H1 (cell line): ENCODE measurements at regions of chr15 and their contacts with region 1.

Region 1: GRCh38 chr15:89673165-89673512 is 6.0 kb downstream of the PLIN1 start:
- DNase-seq: peak in 1 of 2 experiments; percentile 85
- H3K4me3 ChIP-seq: no peak overlapping the region
- H3K27ac ChIP-seq: no peak overlapping the region
- H3K4me1 ChIP-seq: no peaks in the 10 kb centered on the region; a peak in 1 of 7 replicates
- H3K27me3 ChIP-seq: peaks cover 0 to 3% (median 0%) of the 10 kb centered on the region in 4 experiments; a peak in 2 of 7 replicates
- CTCF ChIP-seq: peak; percentile 84 to 94 (median 93)
- EP300 ChIP-seq: no peak
- POLR2A ChIP-seq: no peak
- RAD21 ChIP-seq: peak; percentile 58 to 64

Region 2: GRCh38 chr15:89496155-89497098 is 176.7 kb before region 1 on chr15 and contains the start of gene RHCG:
- CTCF ChIA-PET with region 1: no interaction called
- POLR2A ChIA-PET with region 1: no interaction called
- DNase-seq: peak; percentile 69 to 83
- H3K4me3 ChIP-seq: peak within 1 kb of the TSS; percentile 30 to 62 (median 48)
- H3K27ac ChIP-seq: no peak within 1 kb of the TSS
- H3K4me1 ChIP-seq: peaks cover 0 to 6% (median 4%) of the 10 kb centered on the region in 4 experiments; a peak in 6 of 7 replicates
- H3K27me3 ChIP-seq: peaks cover 2 to 25% (median 19%) of the 10 kb centered on the region in 4 experiments
- CTCF ChIP-seq: peak; percentile 81 to 96 (median 88)
- EP300 ChIP-seq: no peak
- POLR2A ChIP-seq: peak in 1 of 2 experiments; percentile 39; a peak in 1 of 3 replicates
- RAD21 ChIP-seq: peak; percentile 58 to 61
- total RNA-seq, gene RHCG: 0.46 TPM in 1 of 2 replicates, not detected in the other

Region 3: GRCh38 chr15:89647191-89647851 is 25.8 kb before region 1 on chr15:
- CTCF ChIA-PET with region 1: interaction called, 43 read pairs
- POLR2A ChIA-PET with region 1: interaction called, 3 read pairs
- DNase-seq: peak; percentile 39 to 99
- H3K4me3 ChIP-seq: peak overlapping the region in 1 of 4 experiments; percentile 17; a peak in 1 of 8 replicates
- H3K27ac ChIP-seq: no peak overlapping the region
- H3K4me1 ChIP-seq: no peaks in the 10 kb centered on the region
- H3K27me3 ChIP-seq: no peaks in the 10 kb centered on the region
- CTCF ChIP-seq: peak; percentile 85 to 98 (median 98)
- EP300 ChIP-seq: no peak
- POLR2A ChIP-seq: no peak
- RAD21 ChIP-seq: peak; percentile 58 to 64

Region 4: GRCh38 chr15:89656116-89656815 is 16.9 kb before region 1 on chr15:
- CTCF ChIA-PET with region 1: interaction called, 42 read pairs
- POLR2A ChIA-PET with region 1: no interaction called
- DNase-seq: no peak
- H3K4me3 ChIP-seq: peak overlapping the region in 1 of 4 experiments; percentile 92; a peak in 2 of 8 replicates
- H3K27ac ChIP-seq: no peak overlapping the region
- H3K4me1 ChIP-seq: peaks cover 0 to 2% (median under 1%) of the 10 kb centered on the region in 4 experiments; a peak in 2 of 7 replicates
- H3K27me3 ChIP-seq: no peaks in the 10 kb centered on the region; a peak in 1 of 7 replicates
- CTCF ChIP-seq: no peak
- EP300 ChIP-seq: no peak
- POLR2A ChIP-seq: no peak
- RAD21 ChIP-seq: no peak

Region 5: DNA sequence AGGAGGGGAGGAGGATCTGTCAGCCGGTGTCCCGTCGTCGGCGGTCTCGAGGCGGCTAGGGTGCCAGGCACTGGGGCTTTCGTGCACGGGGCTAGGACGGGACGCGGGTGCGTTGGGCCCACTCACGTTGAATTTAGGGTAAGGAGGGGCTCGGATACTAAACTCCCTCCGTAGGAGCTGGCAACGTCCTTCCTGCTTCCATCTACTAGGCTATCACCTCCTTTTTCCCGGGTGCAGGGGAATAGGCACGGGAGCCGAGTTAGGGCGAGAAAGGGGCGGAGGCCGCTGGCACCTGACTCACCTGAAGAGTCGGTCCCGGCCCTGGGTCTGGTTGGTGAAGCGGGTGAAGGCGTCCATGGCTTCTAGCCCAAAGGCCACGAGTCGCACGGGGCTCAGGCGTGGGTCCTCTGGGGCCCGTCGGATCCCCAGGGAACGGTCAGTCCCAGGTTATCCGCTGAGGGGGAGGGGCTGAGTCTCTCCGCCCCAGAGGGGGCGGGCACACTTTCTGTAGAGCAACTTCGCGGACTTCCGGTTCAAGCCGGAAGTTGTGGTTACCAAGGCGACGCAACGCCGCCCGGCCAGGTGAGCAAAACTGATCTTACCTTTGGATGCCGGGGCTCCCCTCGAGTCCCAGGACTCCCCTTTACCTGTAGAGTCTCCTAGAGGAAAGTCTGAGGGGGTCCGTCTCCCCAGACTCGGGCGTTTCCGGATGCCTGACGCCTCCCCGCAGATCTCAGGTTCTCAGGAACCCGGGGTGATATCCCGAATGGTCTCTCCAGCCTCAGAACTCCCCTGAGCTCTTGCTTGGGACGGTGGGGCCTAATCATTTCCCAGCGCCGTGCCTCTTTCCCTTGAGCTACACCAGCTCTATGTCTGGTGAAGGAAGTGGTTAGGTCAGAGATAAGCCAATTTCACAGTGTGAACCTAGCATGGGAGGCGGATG is 17.4 kb after region 1 on chr15 and contains the starts of genes PEX11A and WDR93:
- CTCF ChIA-PET with region 1: interaction called, 20 read pairs
- POLR2A ChIA-PET with region 1: no interaction called
- DNase-seq: peak; percentile 49 to 93
- H3K4me3 ChIP-seq: peak within 1 kb of the TSS; percentile 43 to 88 (median 82)
- H3K27ac ChIP-seq: no peak within 1 kb of the TSS
- H3K4me1 ChIP-seq: no peaks in the 10 kb centered on the region
- H3K27me3 ChIP-seq: peaks cover 0 to 3% (median 0%) of the 10 kb centered on the region in 4 experiments; a peak in 3 of 7 replicates
- CTCF ChIP-seq: no peak
- EP300 ChIP-seq: no peak
- POLR2A ChIP-seq: no peak
- RAD21 ChIP-seq: no peak
- total RNA-seq, gene PEX11A: 2.2 and 2.9 TPM in 2 replicates
- total RNA-seq, gene WDR93: not detected in 2 replicates